PC-9 (cell line): ENCODE measurements at regions of chr7 and their contacts with region 1.

Region 1: GRCh38 chr7:121547544-121548092 is 151.5 kb upstream of the FAM3C start:
- DNase-seq: peak in 1 of 2 experiments; percentile 62
- H3K4me3 ChIP-seq: no peak overlapping the region
- H3K27ac ChIP-seq: no peak overlapping the region
- H3K4me1 ChIP-seq: peaks cover 32% of the 10 kb centered on the region
- H3K27me3 ChIP-seq: no peaks in the 10 kb centered on the region
- CTCF ChIP-seq: peak; percentile 88

Region 2: GRCh38 chr7:120987683-120988590 is 559.7 kb before region 1 on chr7:
- CTCF ChIA-PET with region 1: no interaction called
- POLR2A ChIA-PET with region 1: no interaction called
- intact Hi-C with region 1: loop called (anchors 5 kb)
- DNase-seq: peak; percentile 74 to 85
- H3K4me3 ChIP-seq: peak overlapping the region; percentile 74
- H3K27ac ChIP-seq: no peak overlapping the region
- H3K4me1 ChIP-seq: peaks cover 10% of the 10 kb centered on the region
- H3K27me3 ChIP-seq: no peaks in the 10 kb centered on the region
- CTCF ChIP-seq: peak; percentile 95

Region 3: DNA sequence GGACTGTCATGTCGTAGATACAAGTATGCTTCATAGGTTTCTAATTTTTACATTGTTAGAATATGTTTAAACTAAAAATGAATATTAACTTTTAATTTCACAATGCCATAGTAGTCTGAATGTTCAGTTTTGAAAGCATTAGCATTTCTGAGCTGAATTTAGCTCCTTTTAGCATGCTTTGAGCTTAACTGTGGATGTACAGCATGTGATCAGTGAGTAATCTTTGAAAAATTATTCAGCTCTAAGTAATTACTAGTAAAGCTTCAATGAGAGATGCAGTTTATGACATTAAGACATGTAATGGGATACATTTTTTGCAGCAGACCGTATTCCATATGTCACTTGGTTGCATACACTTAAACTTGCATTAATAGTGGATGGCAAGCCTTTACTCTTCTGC is 333.0 kb before region 1 on chr7:
- CTCF ChIA-PET with region 1: no interaction called
- POLR2A ChIA-PET with region 1: no interaction called
- intact Hi-C with region 1: no loop called
- DNase-seq: no peak
- H3K4me3 ChIP-seq: no peak overlapping the region
- H3K27ac ChIP-seq: no peak overlapping the region
- H3K4me1 ChIP-seq: no peaks in the 10 kb centered on the region
- H3K27me3 ChIP-seq: no peaks in the 10 kb centered on the region
- CTCF ChIP-seq: no peak

Region 4: DNA sequence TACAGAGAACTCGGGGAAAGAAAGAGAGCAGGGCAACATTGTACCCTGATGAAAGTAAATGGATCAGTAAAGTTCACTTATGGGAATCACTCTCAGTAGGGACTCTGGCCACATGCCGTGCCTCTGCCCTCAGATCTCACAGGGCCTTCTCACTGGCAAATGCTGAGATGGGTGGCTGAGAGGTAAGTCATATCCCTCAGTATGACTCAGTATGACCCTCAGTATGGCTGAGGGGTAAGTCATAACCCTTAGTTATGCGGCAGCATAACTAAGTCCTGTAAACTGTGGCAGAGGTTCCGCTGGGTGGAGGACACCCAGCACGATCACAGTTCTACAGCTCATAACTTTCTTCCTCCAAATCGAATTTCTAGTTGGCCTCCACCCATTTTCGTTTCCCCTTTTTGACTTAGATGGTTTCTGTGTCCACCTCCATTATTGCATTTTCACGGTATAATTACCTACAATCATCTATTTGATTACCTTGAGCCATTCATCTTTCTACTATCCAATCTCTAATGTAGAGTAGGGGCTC is 245.3 kb before region 1 on chr7:
- CTCF ChIA-PET with region 1: interaction called, 14 read pairs
- POLR2A ChIA-PET with region 1: no interaction called
- intact Hi-C with region 1: no loop called
- DNase-seq: no peak
- H3K4me3 ChIP-seq: no peak overlapping the region
- H3K27ac ChIP-seq: no peak overlapping the region
- H3K4me1 ChIP-seq: no peaks in the 10 kb centered on the region
- H3K27me3 ChIP-seq: no peaks in the 10 kb centered on the region
- CTCF ChIP-seq: no peak

Region 5: GRCh38 chr7:121395961-121396757 is 151.5 kb before region 1 on chr7 and contains the start of gene FAM3C:
- CTCF ChIA-PET with region 1: no interaction called
- POLR2A ChIA-PET with region 1: interaction called, 3 read pairs
- intact Hi-C with region 1: loop called (anchors 1 kb)
- DNase-seq: peak; percentile 80 to 98
- H3K4me3 ChIP-seq: peak within 1 kb of the TSS; percentile 94
- H3K27ac ChIP-seq: peak within 1 kb of the TSS; percentile 74
- H3K4me1 ChIP-seq: peaks cover 22% of the 10 kb centered on the region
- H3K27me3 ChIP-seq: no peaks in the 10 kb centered on the region
- CTCF ChIP-seq: peak; percentile 88
- total RNA-seq, gene FAM3C: 117 and 134 TPM in 2 replicates

Region 6: DNA sequence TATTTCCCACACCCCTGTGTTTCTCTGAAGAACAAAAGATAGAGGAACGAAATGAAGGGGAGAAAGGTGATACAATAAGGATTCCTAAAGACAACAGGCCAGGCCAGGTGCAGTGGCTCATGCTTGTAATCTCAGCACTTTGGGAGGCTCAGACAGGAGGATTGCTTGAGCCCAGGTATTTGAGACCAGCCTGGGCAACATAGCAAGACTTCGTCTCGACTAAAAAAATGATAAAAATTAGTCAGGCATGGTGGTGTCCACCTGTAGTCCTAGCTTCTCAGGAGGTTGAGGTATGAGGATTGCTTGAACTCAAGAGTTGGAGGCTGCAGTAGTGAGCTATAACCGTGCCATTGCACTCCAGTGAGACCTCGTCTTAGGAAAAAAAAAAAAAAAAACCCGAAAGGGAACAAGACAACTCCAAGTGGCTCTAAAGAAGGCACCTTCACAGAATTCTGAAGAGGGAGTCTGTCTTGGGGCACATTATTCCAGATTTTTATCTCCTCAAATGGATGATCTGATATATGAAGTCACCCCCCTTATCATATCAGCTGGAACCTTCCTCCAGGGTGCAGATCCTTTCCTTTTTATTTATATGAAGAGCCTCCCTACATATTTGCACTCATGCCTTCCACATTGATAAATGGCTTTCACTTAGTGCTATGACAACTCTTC is 110.0 kb before region 1 on chr7:
- CTCF ChIA-PET with region 1: no interaction called
- POLR2A ChIA-PET with region 1: no interaction called
- intact Hi-C with region 1: loop called (anchors 1 kb)
- DNase-seq: peak in 1 of 2 experiments; percentile 72
- H3K4me3 ChIP-seq: no peak overlapping the region
- H3K27ac ChIP-seq: no peak overlapping the region
- H3K4me1 ChIP-seq: peaks cover 32% of the 10 kb centered on the region
- H3K27me3 ChIP-seq: no peaks in the 10 kb centered on the region
- CTCF ChIP-seq: no peak

Region 7: GRCh38 chr7:121480058-121480457 is 67.6 kb before region 1 on chr7:
- CTCF ChIA-PET with region 1: no interaction called
- POLR2A ChIA-PET with region 1: no interaction called
- intact Hi-C with region 1: loop called (anchors 1 kb)
- DNase-seq: peak; percentile 23 to 62
- H3K4me3 ChIP-seq: no peak overlapping the region
- H3K27ac ChIP-seq: no peak overlapping the region
- H3K4me1 ChIP-seq: peaks cover 12% of the 10 kb centered on the region; the same call in 1 of the 2 replicates
- H3K27me3 ChIP-seq: no peaks in the 10 kb centered on the region
- CTCF ChIP-seq: no peak

Region 8: GRCh38 chr7:121595758-121596696 is 48.4 kb after region 1 on chr7:
- CTCF ChIA-PET with region 1: no interaction called
- POLR2A ChIA-PET with region 1: no interaction called
- intact Hi-C with region 1: no loop called
- DNase-seq: no peak
- H3K4me3 ChIP-seq: no peak overlapping the region
- H3K27ac ChIP-seq: no peak overlapping the region
- H3K4me1 ChIP-seq: no peaks in the 10 kb centered on the region
- H3K27me3 ChIP-seq: no peaks in the 10 kb centered on the region
- CTCF ChIP-seq: no peak

Region 9: DNA sequence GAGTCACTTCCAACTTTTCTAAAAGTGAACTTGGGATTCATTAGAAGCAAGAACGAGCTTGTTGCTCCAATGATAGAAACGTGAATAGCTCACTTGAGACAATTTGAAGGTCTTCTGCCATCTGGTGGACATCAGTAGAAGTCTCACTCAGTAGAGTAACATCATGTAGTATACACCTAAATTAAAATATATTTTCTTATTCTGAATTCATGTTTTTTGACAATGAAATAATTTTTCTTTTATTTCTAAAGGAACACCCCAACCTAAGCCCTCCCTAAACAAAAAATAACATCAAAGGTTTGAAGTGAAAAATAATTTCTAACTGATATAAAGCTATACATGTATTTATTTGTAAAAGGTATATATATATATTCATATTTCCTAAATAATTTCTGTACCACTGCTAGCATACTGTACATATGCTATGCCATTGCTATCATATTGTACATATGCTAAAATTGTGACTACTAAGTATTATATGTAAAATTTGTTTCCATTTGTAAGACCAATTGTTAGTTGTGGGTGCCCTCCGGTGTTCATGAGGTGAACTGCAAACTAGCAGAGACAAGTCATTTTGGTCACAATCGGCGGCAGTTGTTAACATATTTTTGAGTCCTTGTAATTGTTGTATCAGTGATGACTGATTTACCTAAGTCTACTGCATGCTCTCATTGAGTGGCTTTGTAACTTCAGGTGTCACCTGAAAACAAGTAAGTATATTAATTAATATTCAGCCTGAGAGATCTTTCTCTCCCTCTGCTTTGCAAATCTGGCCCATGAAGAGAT is 447.2 kb after region 1 on chr7:
- CTCF ChIA-PET with region 1: interaction called, 7 read pairs
- POLR2A ChIA-PET with region 1: interaction called, 4 read pairs
- intact Hi-C with region 1: loop called (anchors 2 kb)
- DNase-seq: peak; percentile 46 to 63
- H3K4me3 ChIP-seq: no peak overlapping the region
- H3K27ac ChIP-seq: no peak overlapping the region
- H3K4me1 ChIP-seq: no peaks in the 10 kb centered on the region
- H3K27me3 ChIP-seq: no peaks in the 10 kb centered on the region
- CTCF ChIP-seq: peak; percentile 94